ENCODE measurements at regions of chr5 and their contacts with region 1.

Region 1: DNA sequence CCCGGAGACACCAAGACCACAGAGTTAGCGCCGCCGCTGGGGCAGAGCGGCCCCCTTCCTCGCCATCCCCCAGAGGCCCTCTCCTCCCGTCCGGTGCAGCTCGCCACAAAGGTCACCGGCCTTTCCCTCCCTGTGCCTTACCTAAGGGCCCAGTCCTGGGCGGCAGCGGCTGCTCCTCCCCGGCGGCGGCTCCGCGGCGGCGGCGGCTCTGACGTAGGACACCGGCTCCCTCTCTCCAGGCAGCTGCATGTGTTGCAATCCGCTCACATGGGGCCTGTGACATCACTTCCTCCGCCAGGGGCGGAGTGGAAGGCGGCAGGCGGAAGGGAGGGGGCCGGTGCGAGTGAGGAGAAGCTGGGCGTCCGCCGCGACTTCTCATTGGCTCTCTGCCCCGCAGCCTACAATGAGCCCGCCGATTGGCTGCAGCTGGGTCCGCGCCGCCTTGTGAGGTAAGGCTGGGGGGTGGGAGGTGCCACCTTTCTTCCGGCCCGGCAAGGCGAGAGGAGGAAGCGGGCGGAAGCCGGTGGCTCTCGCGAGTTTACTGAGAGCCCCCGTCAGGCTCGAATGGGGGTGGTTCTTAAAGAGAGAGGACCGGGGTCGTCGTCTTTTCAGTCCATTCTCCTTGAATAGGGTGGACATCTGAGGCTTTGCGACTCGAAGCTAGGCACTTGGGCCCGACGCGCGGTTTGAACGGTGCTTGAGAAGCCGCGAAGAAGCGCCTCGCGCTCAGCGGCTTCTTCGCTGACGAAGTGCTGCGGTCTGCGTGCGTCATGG is at the start of gene ETF1:
- DNase-seq: peak; percentile 100
- H3K4me3 Mint-ChIP-seq: peak within 1 kb of the TSS; percentile 98
- H3K27ac Mint-ChIP-seq: peak within 1 kb of the TSS; percentile 100
- H3K4me1 Mint-ChIP-seq: peaks cover 71% of the 10 kb centered on the region
- H3K27me3 Mint-ChIP-seq: no peaks in the 10 kb centered on the region
- total RNA-seq, gene ETF1: 131 to 132 TPM

Region 2: GRCh38 chr5:138178516-138179276 is 364.4 kb before region 1 on chr5 and contains the starts of genes BRD8 and KIF20A:
- CTCF ChIA-PET with region 1: no interaction called
- POLR2A ChIA-PET with region 1: interaction called, 3 read pairs
- intact Hi-C with region 1: loop called (anchors 1 kb)
- DNase-seq: peak; percentile 96
- H3K4me3 Mint-ChIP-seq: no peak within 1 kb of the TSS
- H3K27ac Mint-ChIP-seq: no peak within 1 kb of the TSS
- H3K4me1 Mint-ChIP-seq: peaks cover 17% of the 10 kb centered on the region
- H3K27me3 Mint-ChIP-seq: no peaks in the 10 kb centered on the region
- total RNA-seq, gene BRD8: 62.9 to 65.8 TPM
- total RNA-seq, gene KIF20A: 55.5 to 60.3 TPM

Region 3: GRCh38 chr5:138213161-138214029 is 329.7 kb before region 1 on chr5 and contains the start of gene CDC23:
- CTCF ChIA-PET with region 1: no interaction called
- POLR2A ChIA-PET with region 1: interaction called, 3 read pairs
- intact Hi-C with region 1: loop called (anchors 1 kb)
- DNase-seq: peak; percentile 94
- H3K4me3 Mint-ChIP-seq: peak within 1 kb of the TSS; percentile 100
- H3K27ac Mint-ChIP-seq: peak within 1 kb of the TSS; percentile 89
- H3K4me1 Mint-ChIP-seq: peaks cover 20% of the 10 kb centered on the region
- H3K27me3 Mint-ChIP-seq: no peaks in the 10 kb centered on the region
- total RNA-seq, gene CDC23: 32.4 to 33.4 TPM

Region 4: GRCh38 chr5:138337685-138338410 is 205.3 kb before region 1 on chr5 and contains the start of gene FAM53C:
- CTCF ChIA-PET with region 1: no interaction called
- POLR2A ChIA-PET with region 1: interaction called, 3 read pairs
- intact Hi-C with region 1: loop called (anchors 5 kb)
- DNase-seq: peak; percentile 94
- H3K4me3 Mint-ChIP-seq: peak within 1 kb of the TSS; percentile 93
- H3K27ac Mint-ChIP-seq: peak within 1 kb of the TSS; percentile 96
- H3K4me1 Mint-ChIP-seq: peaks cover 38% of the 10 kb centered on the region
- H3K27me3 Mint-ChIP-seq: no peaks in the 10 kb centered on the region
- total RNA-seq, gene FAM53C: 17.2 to 19.2 TPM

Region 5: GRCh38 chr5:138391859-138392386 is 151.2 kb before region 1 on chr5:
- CTCF ChIA-PET with region 1: no interaction called
- POLR2A ChIA-PET with region 1: no interaction called
- intact Hi-C with region 1: no loop called
- DNase-seq: no peak
- H3K4me3 Mint-ChIP-seq: no peak overlapping the region
- H3K27ac Mint-ChIP-seq: no peak overlapping the region
- H3K4me1 Mint-ChIP-seq: no peaks in the 10 kb centered on the region
- H3K27me3 Mint-ChIP-seq: no peaks in the 10 kb centered on the region

Region 6: GRCh38 chr5:138503487-138504270 is 39.5 kb before region 1 on chr5:
- CTCF ChIA-PET with region 1: interaction called, 10 read pairs
- POLR2A ChIA-PET with region 1: no interaction called
- intact Hi-C with region 1: no loop called
- DNase-seq: peak; percentile 39
- H3K4me3 Mint-ChIP-seq: no peak overlapping the region
- H3K27ac Mint-ChIP-seq: no peak overlapping the region
- H3K4me1 Mint-ChIP-seq: no peaks in the 10 kb centered on the region
- H3K27me3 Mint-ChIP-seq: no peaks in the 10 kb centered on the region

Region 7: DNA sequence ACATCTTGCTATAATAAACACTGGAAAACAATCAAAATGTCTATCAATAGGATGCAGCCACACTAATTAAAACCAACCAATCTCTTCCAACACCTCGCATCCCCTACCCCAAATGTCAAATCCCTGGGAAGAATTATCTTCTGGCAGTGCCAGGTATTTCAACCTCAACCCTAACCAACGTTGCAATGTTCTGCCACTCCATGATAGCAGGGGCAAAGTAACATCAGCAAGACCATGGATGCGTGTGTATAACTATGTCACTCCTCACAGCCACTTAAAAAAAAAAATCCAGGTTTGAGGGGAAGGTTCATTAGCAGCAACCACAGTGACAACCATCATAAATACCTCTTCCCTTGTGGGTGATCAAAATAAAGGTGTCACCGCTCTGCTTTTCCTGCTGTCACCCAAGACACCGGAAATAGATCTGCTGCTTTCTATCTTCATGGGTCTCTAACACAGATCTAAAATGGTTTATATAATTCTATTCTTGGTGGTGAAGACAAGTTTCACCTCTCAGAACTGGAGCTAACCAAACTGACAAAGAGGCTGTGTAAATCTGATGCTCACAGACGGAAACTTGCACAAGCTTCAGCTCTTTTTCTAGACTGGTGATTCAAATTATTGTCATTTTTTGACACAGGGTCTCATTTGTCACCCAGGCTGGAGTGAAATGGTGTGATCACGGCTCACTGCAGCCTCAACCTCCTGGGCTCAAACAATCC is 22.1 kb after region 1 on chr5:
- CTCF ChIA-PET with region 1: interaction called, 7 read pairs
- POLR2A ChIA-PET with region 1: interaction called, 12 read pairs
- intact Hi-C with region 1: no loop called
- DNase-seq: peak; percentile 50
- H3K4me3 Mint-ChIP-seq: no peak overlapping the region
- H3K27ac Mint-ChIP-seq: peak overlapping the region; percentile 93
- H3K4me1 Mint-ChIP-seq: peaks cover 74% of the 10 kb centered on the region
- H3K27me3 Mint-ChIP-seq: no peaks in the 10 kb centered on the region

Region 8: GRCh38 chr5:140174465-140175366 is 1631.6 kb after region 1 on chr5 and contains the start of gene CYSTM1:
- CTCF ChIA-PET with region 1: no interaction called
- POLR2A ChIA-PET with region 1: no interaction called
- intact Hi-C with region 1: loop called (anchors 10 kb)
- DNase-seq: peak; percentile 97
- H3K4me3 Mint-ChIP-seq: peak within 1 kb of the TSS; percentile 92
- H3K27ac Mint-ChIP-seq: peak within 1 kb of the TSS; percentile 64
- H3K4me1 Mint-ChIP-seq: peaks cover 12% of the 10 kb centered on the region
- H3K27me3 Mint-ChIP-seq: peaks cover 3% of the 10 kb centered on the region
- total RNA-seq, gene CYSTM1: 25.2 to 26.5 TPM

Measured in activated CD4-positive, alpha-beta memory T cell treated with anti-CD3 and anti-CD28 coated beads for 36 hours (primary cell).